K562 (cell line): ENCODE measurements at regions of chr10 and their contacts with region 1.

Region 1: GRCh38 chr10:78231939-78232338 is 198.3 kb downstream of the RPS24 start:
- DNase-seq: peak in 1 of 4 experiments; percentile 8
- ATAC-seq: no peak; the same call in 1 of the 3 replicates
- H3K4me3 ChIP-seq: no peak overlapping the region
- H3K27ac ChIP-seq: no peak overlapping the region
- H3K4me1 ChIP-seq: no peaks in the 10 kb centered on the region
- H3K27me3 ChIP-seq: peaks cover 0 to 29% of the 10 kb centered on the region in 2 experiments; a peak in 3 of 5 replicates
- CTCF ChIP-seq: peak; percentile 12 to 35 (median 17); a peak in 2 of 6 replicates
- EP300 ChIP-seq: no peak
- POLR2A ChIP-seq: no peak
- RAD21 ChIP-seq: peak in 1 of 2 experiments; percentile 43; a peak in 1 of 4 replicates

Region 2: GRCh38 chr10:78015546-78015945 is 216.4 kb before region 1 on chr10:
- CTCF ChIA-PET with region 1: no interaction called
- POLR2A ChIA-PET with region 1: no interaction called
- in situ Hi-C with region 1: no loop called
- intact Hi-C with region 1: no loop called
- DNase-seq: no peak
- ATAC-seq: no peak
- H3K4me3 ChIP-seq: no peak overlapping the region
- H3K27ac ChIP-seq: no peak overlapping the region
- H3K4me1 ChIP-seq: no peaks in the 10 kb centered on the region
- H3K27me3 ChIP-seq: no peaks in the 10 kb centered on the region
- CTCF ChIP-seq: no peak
- EP300 ChIP-seq: no peak
- POLR2A ChIP-seq: no peak
- RAD21 ChIP-seq: no peak

Region 3: GRCh38 chr10:78215645-78216044 is 16.3 kb before region 1 on chr10:
- CTCF ChIA-PET with region 1: no interaction called
- POLR2A ChIA-PET with region 1: no interaction called
- in situ Hi-C with region 1: no loop called
- intact Hi-C with region 1: no loop called
- DNase-seq: no peak
- ATAC-seq: no peak
- H3K4me3 ChIP-seq: no peak overlapping the region
- H3K27ac ChIP-seq: no peak overlapping the region
- H3K4me1 ChIP-seq: no peaks in the 10 kb centered on the region
- H3K27me3 ChIP-seq: peaks cover 3 to 49% of the 10 kb centered on the region in 2 experiments; a peak in 4 of 5 replicates
- CTCF ChIP-seq: no peak
- EP300 ChIP-seq: no peak
- POLR2A ChIP-seq: no peak
- RAD21 ChIP-seq: no peak

Region 4: GRCh38 chr10:78292250-78292981 is 60.5 kb after region 1 on chr10:
- CTCF ChIA-PET with region 1: no interaction called
- POLR2A ChIA-PET with region 1: no interaction called
- in situ Hi-C with region 1: no loop called
- intact Hi-C with region 1: no loop called
- DNase-seq: no peak
- ATAC-seq: no peak
- H3K4me3 ChIP-seq: no peak overlapping the region
- H3K27ac ChIP-seq: no peak overlapping the region
- H3K4me1 ChIP-seq: no peaks in the 10 kb centered on the region
- H3K27me3 ChIP-seq: peaks cover 7 to 44% of the 10 kb centered on the region in 2 experiments; a peak in 4 of 5 replicates
- CTCF ChIP-seq: no peak
- EP300 ChIP-seq: no peak
- POLR2A ChIP-seq: no peak
- RAD21 ChIP-seq: no peak

Region 5: GRCh38 chr10:78302989-78303854 is 71.3 kb after region 1 on chr10:
- CTCF ChIA-PET with region 1: interaction called, 11 read pairs
- POLR2A ChIA-PET with region 1: no interaction called
- in situ Hi-C with region 1: no loop called
- intact Hi-C with region 1: no loop called
- DNase-seq: peak; percentile 95 to 100 (median 100)
- ATAC-seq: peak; percentile 97
- H3K4me3 ChIP-seq: peak overlapping the region; percentile 58
- H3K27ac ChIP-seq: peak overlapping the region; percentile 39; the same call in 2 of the 3 replicates
- H3K4me1 ChIP-seq: peaks cover 5 to 13% of the 10 kb centered on the region in 2 experiments; a peak in 4 of 5 replicates
- H3K27me3 ChIP-seq: peaks cover 6 to 26% of the 10 kb centered on the region in 2 experiments; a peak in 3 of 5 replicates
- CTCF ChIP-seq: peak; percentile 82 to 87 (median 85)
- EP300 ChIP-seq: no peak
- POLR2A ChIP-seq: peak; percentile 66
- RAD21 ChIP-seq: peak; percentile 52 to 53